Activated B cell treated with CpG ODN at 0.5 μM for 24 hours (primary cell): ENCODE measurements at regions of chr2 and their contacts with region 1.

Region 1: GRCh38 chr2:130342533-130343275 is at the start of gene IMP4:
- DNase-seq: peak; percentile 86
- ATAC-seq: peak; percentile 84
- H3K4me3 Mint-ChIP-seq: peak within 1 kb of the TSS; percentile 100
- H3K27ac Mint-ChIP-seq: peak within 1 kb of the TSS; percentile 100
- H3K4me1 Mint-ChIP-seq: peaks cover 57% of the 10 kb centered on the region
- H3K27me3 Mint-ChIP-seq: no peaks in the 10 kb centered on the region
- CTCF ChIP-seq: no peak
- total RNA-seq, gene IMP4: 121 and 140 TPM in 2 replicates

Region 2: GRCh38 chr2:130158631-130159030 is 184.1 kb before region 1 on chr2:
- CTCF ChIA-PET with region 1: interaction called, 3 read pairs
- POLR2A ChIA-PET with region 1: interaction called, 10 read pairs
- intact Hi-C with region 1: no loop called
- DNase-seq: no peak
- ATAC-seq: no peak
- H3K4me3 Mint-ChIP-seq: no peak overlapping the region
- H3K27ac Mint-ChIP-seq: peak overlapping the region; percentile 90
- H3K4me1 Mint-ChIP-seq: peaks cover 33% of the 10 kb centered on the region
- H3K27me3 Mint-ChIP-seq: no peaks in the 10 kb centered on the region
- CTCF ChIP-seq: no peak

Region 3: GRCh38 chr2:130332271-130333073 is 10.2 kb before region 1 on chr2:
- CTCF ChIA-PET with region 1: interaction called, 13 read pairs
- POLR2A ChIA-PET with region 1: interaction called, 17 read pairs
- intact Hi-C with region 1: no loop called
- DNase-seq: peak; percentile 65
- ATAC-seq: peak; percentile 91
- H3K4me3 Mint-ChIP-seq: peak overlapping the region; percentile 36
- H3K27ac Mint-ChIP-seq: no peak overlapping the region
- H3K4me1 Mint-ChIP-seq: peaks cover 4% of the 10 kb centered on the region
- H3K27me3 Mint-ChIP-seq: peaks cover 20% of the 10 kb centered on the region
- CTCF ChIP-seq: peak; percentile 94

Region 4: GRCh38 chr2:130366720-130367119 is 24.0 kb after region 1 on chr2:
- CTCF ChIA-PET with region 1: interaction called, 5 read pairs
- POLR2A ChIA-PET with region 1: interaction called, 96 read pairs
- intact Hi-C with region 1: no loop called
- DNase-seq: no peak
- ATAC-seq: no peak
- H3K4me3 Mint-ChIP-seq: no peak overlapping the region
- H3K27ac Mint-ChIP-seq: no peak overlapping the region
- H3K4me1 Mint-ChIP-seq: peaks cover 23% of the 10 kb centered on the region
- H3K27me3 Mint-ChIP-seq: peaks cover 3% of the 10 kb centered on the region
- CTCF ChIP-seq: no peak

Region 5: DNA sequence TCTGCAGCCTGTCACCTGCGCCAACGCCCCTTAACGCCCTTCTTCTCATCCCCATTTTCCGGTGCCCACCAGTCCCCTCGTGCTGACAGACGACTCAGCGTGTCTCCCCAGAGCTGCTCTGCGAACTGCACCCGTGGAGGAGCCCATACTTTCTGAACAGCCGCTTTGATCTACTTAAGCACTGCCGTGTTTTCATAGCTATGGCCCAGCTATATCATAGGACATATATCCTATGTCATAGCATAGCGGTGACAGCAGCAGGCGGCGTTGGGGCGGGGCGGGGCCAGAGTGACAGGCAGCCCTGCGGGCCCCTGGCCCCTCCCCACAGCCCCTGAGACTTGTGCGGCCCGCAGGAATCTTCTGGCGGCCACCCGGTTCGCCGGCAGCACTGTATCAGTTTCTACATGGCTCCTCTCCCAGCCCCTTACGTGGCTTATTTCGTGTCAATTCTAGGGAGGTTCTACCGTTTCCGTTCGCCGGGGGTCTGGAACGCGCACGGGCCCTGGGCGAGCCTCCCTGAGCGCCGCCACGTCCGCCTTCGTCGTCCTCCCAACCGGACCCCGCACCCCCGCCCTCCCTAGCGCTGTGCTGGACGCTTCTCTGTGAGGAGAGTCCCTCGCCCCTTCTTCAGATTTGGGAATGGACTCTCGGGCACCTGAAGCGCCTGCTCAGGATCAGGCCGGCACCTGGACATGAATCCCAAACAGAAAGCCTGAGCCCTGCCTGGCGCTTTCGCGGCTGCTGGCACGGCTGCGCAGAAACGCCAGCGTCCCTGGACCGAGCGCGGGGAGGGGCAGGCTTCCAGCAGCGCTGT is 48.6 kb after region 1 on chr2:
- CTCF ChIA-PET with region 1: interaction called, 11 read pairs
- POLR2A ChIA-PET with region 1: interaction called, 21 read pairs
- intact Hi-C with region 1: loop called (anchors 1 kb)
- DNase-seq: peak; percentile 64
- ATAC-seq: peak; percentile 90
- H3K4me3 Mint-ChIP-seq: peak overlapping the region; percentile 91
- H3K27ac Mint-ChIP-seq: peak overlapping the region; percentile 87
- H3K4me1 Mint-ChIP-seq: peaks cover 58% of the 10 kb centered on the region
- H3K27me3 Mint-ChIP-seq: no peaks in the 10 kb centered on the region
- CTCF ChIP-seq: no peak

Region 6: GRCh38 chr2:131093006-131093695 is 750.4 kb after region 1 on chr2 and contains the start of gene FAM168B:
- CTCF ChIA-PET with region 1: no interaction called
- POLR2A ChIA-PET with region 1: interaction called, 6 read pairs
- intact Hi-C with region 1: loop called (anchors 2 kb)
- DNase-seq: peak; percentile 96
- ATAC-seq: peak; percentile 78
- H3K4me3 Mint-ChIP-seq: peak within 1 kb of the TSS; percentile 97
- H3K27ac Mint-ChIP-seq: peak within 1 kb of the TSS; percentile 98
- H3K4me1 Mint-ChIP-seq: peaks cover 22% of the 10 kb centered on the region
- H3K27me3 Mint-ChIP-seq: no peaks in the 10 kb centered on the region
- CTCF ChIP-seq: no peak
- total RNA-seq, gene FAM168B: 59.9 and 62.5 TPM in 2 replicates